Endothelial cell of umbilical vein (primary cell): ENCODE measurements at regions of chr1 and their contacts with region 1.

Region 1: GRCh38 chr1:28088168-28088961 is at the start of gene EYA3:
- DNase-seq: peak; percentile 100
- H3K4me3 ChIP-seq: peak within 1 kb of the TSS; percentile 51 to 81 (median 73)
- H3K27ac ChIP-seq: peak within 1 kb of the TSS; percentile 45
- H3K4me1 ChIP-seq: peaks cover 12% of the 10 kb centered on the region
- H3K27me3 ChIP-seq: no peaks in the 10 kb centered on the region
- CTCF ChIP-seq: no peak
- POLR2A ChIP-seq: peak; percentile 96
- total RNA-seq, gene EYA3: 29.7 and 33.0 TPM in 2 replicates

Region 2: GRCh38 chr1:27959400-27960217 is 128.8 kb before region 1 on chr1 and contains the start of gene XKR8:
- CTCF ChIA-PET with region 1: no interaction called
- POLR2A ChIA-PET with region 1: no interaction called
- dilution Hi-C with region 1: no loop called
- intact Hi-C with region 1: loop called (anchors 1 kb)
- DNase-seq: peak; percentile 82
- H3K4me3 ChIP-seq: peak within 1 kb of the TSS; percentile 56 to 71 (median 60)
- H3K27ac ChIP-seq: peak within 1 kb of the TSS; percentile 74
- H3K4me1 ChIP-seq: peaks cover 18% of the 10 kb centered on the region
- H3K27me3 ChIP-seq: no peaks in the 10 kb centered on the region
- CTCF ChIP-seq: peak; percentile 41 to 68
- POLR2A ChIP-seq: peak; percentile 83
- total RNA-seq, gene XKR8: 10.0 TPM in 2 replicates

Region 3: DNA sequence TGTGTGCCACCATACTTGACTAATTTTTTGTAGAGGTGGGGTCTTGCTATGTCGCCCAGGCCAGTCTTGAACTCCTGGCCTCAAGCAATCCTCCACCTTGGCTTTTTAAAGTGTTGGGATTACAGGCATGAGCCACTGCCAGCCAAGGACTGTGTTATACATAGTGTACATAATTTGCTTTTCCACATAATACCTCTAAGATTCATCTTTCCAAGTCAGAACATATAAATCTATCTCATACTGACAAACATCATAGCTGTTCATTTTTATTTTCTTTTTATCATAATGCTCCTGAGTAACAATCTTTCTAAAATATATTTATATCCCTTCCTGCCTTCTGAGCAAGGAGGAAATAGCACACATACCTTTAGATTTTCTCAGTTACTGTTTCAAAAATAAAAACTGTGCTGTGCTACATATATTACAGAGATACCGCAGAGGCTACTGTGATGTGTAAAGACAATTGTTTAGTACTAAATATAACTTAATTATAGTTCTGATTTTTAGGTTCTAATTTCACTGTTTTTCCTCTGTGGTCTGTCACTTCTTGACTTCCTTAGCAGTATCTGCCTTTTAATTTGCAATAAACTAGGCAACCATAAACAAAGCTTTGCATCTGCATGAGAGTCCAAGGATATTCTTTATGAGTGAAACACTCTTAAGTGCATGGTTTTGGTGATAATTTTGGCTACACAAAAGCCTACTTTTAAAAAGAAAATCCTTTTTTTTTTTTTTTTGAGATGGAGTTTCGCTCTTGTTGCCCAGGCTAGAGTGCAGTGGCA is 59.3 kb before region 1 on chr1:
- CTCF ChIA-PET with region 1: interaction called, 8 read pairs
- POLR2A ChIA-PET with region 1: no interaction called
- dilution Hi-C with region 1: no loop called
- intact Hi-C with region 1: loop called (anchors 2 kb)
- DNase-seq: peak; percentile 75
- H3K4me3 ChIP-seq: peak overlapping the region in 1 of 3 experiments; percentile 19
- H3K27ac ChIP-seq: peak overlapping the region; percentile 90
- H3K4me1 ChIP-seq: peaks cover 19% of the 10 kb centered on the region
- H3K27me3 ChIP-seq: no peaks in the 10 kb centered on the region
- CTCF ChIP-seq: no peak
- POLR2A ChIP-seq: no peak

Region 4: DNA sequence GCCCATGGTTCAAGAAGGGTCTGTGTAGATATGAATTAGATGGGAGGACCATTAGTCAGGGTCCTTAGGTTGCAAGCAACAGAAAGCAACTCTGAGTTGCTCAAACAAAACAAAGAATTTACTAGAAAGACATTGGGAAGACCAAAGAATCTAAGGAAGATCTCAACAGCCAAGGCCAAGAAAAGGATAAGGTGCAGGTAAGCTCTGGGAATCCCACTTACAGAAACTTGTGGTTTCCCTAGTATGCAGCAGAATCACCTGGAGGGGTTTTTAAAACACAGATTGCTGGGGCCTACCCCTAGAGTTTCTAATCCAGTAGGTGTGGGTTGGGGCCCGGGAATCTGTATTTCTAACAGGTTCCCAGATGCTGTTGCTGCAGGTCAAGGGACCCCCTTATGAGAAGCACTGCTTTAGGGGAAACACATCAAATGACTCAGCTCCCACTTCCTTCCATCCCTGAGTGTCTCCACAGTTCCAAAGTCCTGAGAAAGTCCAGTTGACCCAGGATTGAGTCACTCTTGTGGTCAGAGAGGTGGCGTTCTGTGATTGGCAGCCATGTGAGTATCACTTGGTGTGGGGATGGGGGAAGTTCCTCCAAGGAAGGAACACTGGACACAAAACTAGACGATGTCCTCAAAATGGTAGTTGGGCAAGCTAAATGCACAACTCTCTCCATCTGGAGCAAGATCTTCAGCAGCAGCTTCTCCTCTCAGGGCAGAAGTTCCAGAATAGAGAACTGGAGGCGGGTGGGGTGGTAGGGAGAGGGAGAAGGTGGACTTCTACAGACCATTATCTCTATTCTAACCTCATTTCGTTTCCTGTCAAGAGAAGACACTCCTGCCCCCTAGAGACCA is 24.2 kb after region 1 on chr1:
- CTCF ChIA-PET with region 1: interaction called, 11 read pairs
- POLR2A ChIA-PET with region 1: no interaction called
- dilution Hi-C with region 1: no loop called
- intact Hi-C with region 1: loop called (anchors 2 kb)
- DNase-seq: peak; percentile 70
- H3K4me3 ChIP-seq: no peak overlapping the region
- H3K27ac ChIP-seq: peak overlapping the region; percentile 69
- H3K4me1 ChIP-seq: peaks cover 21% of the 10 kb centered on the region
- H3K27me3 ChIP-seq: no peaks in the 10 kb centered on the region
- CTCF ChIP-seq: no peak
- POLR2A ChIP-seq: no peak

Region 5: DNA sequence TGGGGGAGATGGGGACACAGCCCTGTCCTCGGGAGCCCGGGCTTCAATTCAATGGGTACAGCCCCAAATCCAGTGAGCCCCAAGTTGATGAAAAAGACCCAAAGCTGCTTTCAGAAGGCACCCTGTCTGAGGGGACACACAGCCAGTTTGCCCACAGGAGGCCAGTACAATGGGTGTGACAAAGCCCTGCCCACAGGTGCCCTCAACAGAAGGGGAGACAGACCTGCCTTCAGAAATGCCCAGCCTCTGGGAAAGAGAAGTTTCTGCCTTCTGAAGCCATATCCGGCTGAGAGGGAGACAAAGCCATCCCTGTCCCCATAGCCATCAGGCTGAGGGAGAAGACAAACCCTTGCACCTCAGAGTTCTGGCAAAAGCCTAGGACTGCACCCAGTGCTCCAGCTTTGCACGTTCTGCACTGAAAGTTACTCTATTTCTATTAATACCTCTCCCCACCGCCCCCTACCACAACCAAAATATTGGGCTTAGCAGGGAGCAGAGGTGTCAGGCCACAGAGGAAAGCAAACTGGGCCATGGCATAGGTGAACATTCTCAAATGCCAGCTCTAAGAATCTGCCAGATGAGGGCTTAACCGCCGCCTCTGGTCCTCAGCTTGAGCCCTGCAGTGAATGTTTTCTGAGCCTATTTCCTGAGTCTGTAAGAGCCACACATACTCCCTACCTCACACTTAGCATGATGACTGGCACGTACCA is 106.1 kb after region 1 on chr1:
- CTCF ChIA-PET with region 1: interaction called, 47 read pairs
- POLR2A ChIA-PET with region 1: no interaction called
- dilution Hi-C with region 1: no loop called
- intact Hi-C with region 1: no loop called
- DNase-seq: no peak
- H3K4me3 ChIP-seq: no peak overlapping the region
- H3K27ac ChIP-seq: no peak overlapping the region
- H3K4me1 ChIP-seq: peaks cover 3% of the 10 kb centered on the region
- H3K27me3 ChIP-seq: no peaks in the 10 kb centered on the region
- CTCF ChIP-seq: no peak
- POLR2A ChIP-seq: no peak